Heart left ventricle (tissue), 16 donors: ENCODE measurements at regions of chr1 and their contacts with region 1.

Region 1: DNA sequence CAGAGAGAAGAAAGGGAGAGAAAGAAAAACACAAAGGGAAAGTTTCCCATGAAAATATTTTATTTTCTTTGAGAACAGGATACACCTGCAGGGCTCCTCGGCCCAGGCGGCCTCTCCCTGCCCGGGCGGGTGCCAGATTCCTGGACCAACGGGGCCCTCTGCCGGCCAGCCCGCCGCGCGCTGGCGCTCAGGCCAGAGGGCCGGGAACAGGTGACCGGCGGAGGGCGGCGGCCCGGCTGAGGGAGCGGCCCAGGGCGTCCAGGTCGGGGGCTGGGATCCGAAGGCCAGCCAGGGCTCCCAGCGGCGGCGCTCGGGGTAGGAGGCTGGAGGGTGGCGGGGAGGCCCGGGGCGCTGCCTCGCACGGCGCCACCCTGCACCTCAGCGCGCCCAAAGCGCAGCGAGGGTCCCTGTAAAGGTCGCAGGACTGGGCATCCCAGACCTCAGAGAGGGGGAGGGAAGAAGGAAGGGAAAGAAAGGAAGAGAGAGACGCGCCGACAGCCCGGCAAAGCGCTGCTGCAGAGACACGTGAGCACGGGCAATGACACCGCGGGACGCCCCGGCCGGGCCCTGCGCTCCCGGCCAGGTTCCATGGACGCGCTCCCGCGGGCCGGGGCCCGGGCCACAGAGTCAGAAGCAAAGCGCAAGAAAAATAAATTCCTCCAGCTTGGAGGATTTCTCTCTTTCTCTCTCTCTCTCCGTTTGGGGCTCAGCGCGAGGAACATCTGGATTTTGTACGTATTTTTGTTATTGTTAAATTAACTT is 927 bp downstream of the WNT9A start:
- DNase-seq: peak; percentile 75 to 84 (median 78)
- ATAC-seq: peak; percentile 59 to 79 (median 72)
- H3K4me3 ChIP-seq: peak overlapping the region; percentile 26 to 73 (median 59)
- H3K27ac ChIP-seq: peak overlapping the region in 10 of 12 donors; percentile 34 to 95 (median 89)
- H3K4me1 ChIP-seq: peaks cover 0 to 57% (median 32%) of the 10 kb centered on the region in 12 donors
- H3K27me3 ChIP-seq: peaks cover 0 to 29% (median 0%) of the 10 kb centered on the region in 9 donors
- CTCF ChIP-seq: peak; percentile 62 to 90 (median 82)
- POLR2A ChIP-seq: no peak

Region 2: GRCh38 chr1:227459326-227459841 is 487.4 kb before region 1 on chr1:
- intact Hi-C with region 1: no loop called
- DNase-seq: no peak
- ATAC-seq: no peak
- H3K4me3 ChIP-seq: no peak overlapping the region
- H3K27ac ChIP-seq: no peak overlapping the region
- H3K4me1 ChIP-seq: no peaks in the 10 kb centered on the region
- H3K27me3 ChIP-seq: peaks cover 0 to 10% (median 0%) of the 10 kb centered on the region in 9 donors
- CTCF ChIP-seq: no peak
- POLR2A ChIP-seq: no peak

Region 3: GRCh38 chr1:227482023-227482299 is 464.8 kb before region 1 on chr1:
- intact Hi-C with region 1: loop called (anchors 2 to 5 kb)
- DNase-seq: no peak
- ATAC-seq: no peak
- H3K4me3 ChIP-seq: no peak overlapping the region
- H3K27ac ChIP-seq: no peak overlapping the region
- H3K4me1 ChIP-seq: no peaks in the 10 kb centered on the region
- H3K27me3 ChIP-seq: peaks cover 0 to 14% (median 0%) of the 10 kb centered on the region in 9 donors
- CTCF ChIP-seq: no peak
- POLR2A ChIP-seq: no peak

Region 4: DNA sequence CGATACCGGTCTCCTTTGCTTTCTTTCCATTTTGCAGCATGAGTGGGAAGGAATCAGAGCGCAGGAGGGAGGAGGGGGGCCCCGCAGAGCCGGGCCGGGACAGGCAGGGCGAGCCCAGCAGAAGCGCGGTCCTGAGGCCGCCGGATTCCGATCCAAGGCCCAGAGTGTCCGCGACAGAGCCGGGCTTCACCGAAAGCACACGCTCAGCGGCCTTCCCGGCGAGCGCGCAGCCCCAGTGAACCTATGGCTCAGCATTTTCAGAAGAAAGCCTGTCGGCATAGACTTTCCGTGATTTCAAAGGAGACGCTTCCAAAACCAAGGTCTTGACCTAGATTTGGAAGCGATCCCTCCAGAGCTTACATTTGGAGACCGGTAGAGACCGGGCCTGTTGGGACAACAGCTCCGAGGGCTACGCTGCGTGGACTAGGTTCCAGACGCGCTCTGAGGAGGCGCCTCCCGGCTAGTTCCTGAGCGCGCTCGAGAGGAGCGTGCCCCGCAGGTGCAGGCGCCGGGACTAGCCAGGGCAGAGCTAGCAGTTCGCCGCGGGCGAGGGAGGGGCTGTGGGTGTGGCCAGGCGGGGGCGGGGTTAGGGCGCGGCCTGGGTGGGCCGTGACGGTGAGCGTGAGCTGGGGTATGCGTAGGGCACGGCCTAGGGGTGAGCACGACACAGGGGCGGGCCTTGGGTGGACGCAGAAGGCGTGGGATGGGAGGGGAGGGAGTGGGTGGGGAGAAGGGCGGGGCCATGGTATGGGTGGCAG is 159.1 kb before region 1 on chr1:
- intact Hi-C with region 1: loop called in 1 of 10 experiments (anchors 1 kb)
- DNase-seq: peak; percentile 90 to 97 (median 92)
- ATAC-seq: peak; percentile 95 to 96 (median 96)
- H3K4me3 ChIP-seq: peak overlapping the region; percentile 38 to 78 (median 60)
- H3K27ac ChIP-seq: peak overlapping the region in 11 of 12 donors; percentile 47 to 88 (median 61)
- H3K4me1 ChIP-seq: peaks cover 4 to 28% (median 18%) of the 10 kb centered on the region in 12 donors
- H3K27me3 ChIP-seq: peaks cover 0 to 13% (median 0%) of the 10 kb centered on the region in 9 donors
- CTCF ChIP-seq: no peak
- POLR2A ChIP-seq: peak in 1 of 2 donors; percentile 48

Region 5: GRCh38 chr1:227999056-227999930 is 52.5 kb after region 1 on chr1:
- intact Hi-C with region 1: no loop called
- DNase-seq: peak in 4 of 5 donors; percentile 35 to 62 (median 52)
- ATAC-seq: peak; percentile 84 to 92 (median 90)
- H3K4me3 ChIP-seq: no peak overlapping the region
- H3K27ac ChIP-seq: no peak overlapping the region
- H3K4me1 ChIP-seq: no peaks in the 10 kb centered on the region
- H3K27me3 ChIP-seq: peaks cover 6 to 28% (median 14%) of the 10 kb centered on the region in 9 donors
- CTCF ChIP-seq: peak; percentile 49 to 73 (median 62)
- POLR2A ChIP-seq: no peak